ENCODE measurements at regions of chr7 and their contacts with region 1.

Region 1: GRCh38 chr7:73851410-73852234 is 9.3 kb upstream of the METTL27 start:
- DNase-seq: peak in 4 of 5 donors; percentile 15 to 53 (median 24)
- H3K4me3 ChIP-seq: no peak overlapping the region
- H3K4me3 Mint-ChIP-seq: peak overlapping the region in 2 of 8 donors; percentile 12 to 53
- H3K27ac ChIP-seq: no peak overlapping the region
- H3K27ac Mint-ChIP-seq: peak overlapping the region in 6 of 7 donors; percentile 7 to 65 (median 61)
- H3K4me1 ChIP-seq: peaks cover 17% of the 10 kb centered on the region
- H3K4me1 Mint-ChIP-seq: peaks cover 6 to 17% (median 11%) of the 10 kb centered on the region in 4 donors
- H3K27me3 ChIP-seq: no peaks in the 10 kb centered on the region
- H3K27me3 Mint-ChIP-seq: peaks cover 3 to 9% of the 10 kb centered on the region in 2 donors

Region 2: DNA sequence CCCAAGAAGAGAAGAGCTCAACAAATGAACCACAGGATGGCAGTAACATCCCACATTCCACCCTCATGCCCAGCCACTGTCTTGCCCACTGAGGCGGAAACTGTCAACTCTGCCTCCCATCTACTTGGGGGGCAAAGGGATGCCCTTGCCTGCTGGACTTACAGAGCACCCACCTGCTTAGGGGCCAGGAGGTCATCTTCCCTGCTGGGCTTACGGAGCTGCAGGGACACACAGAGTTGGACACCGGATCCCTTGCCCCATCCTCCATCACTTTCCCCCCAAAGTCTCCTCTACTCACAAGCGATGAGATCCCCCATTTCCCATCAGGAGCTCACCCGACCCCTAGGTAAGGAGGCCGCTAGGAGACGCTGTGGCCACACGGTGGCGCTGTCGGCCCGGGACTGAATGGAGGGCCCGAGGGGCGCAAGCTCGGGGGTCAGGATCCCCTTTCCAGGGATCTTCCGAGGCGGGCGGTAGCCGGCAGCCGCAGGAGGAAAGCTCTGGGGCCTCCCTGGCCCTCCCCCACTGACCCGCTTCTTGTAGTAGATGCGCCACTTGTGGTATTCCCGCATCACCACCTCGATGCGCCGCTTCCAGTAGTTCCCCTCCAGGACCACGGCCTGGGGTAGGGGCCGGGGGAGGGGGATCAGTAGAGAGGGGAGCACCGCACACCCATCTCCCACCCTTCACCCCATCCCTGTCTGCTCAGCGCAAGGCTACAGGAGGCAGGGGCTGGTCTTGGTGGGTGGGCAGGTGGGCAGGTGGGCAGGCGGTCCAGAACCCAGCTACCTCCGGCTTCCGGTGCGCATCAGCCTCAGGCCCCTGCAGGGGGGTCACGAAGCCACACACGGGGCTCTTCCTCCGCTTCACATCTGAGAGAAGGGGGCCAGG is 244.6 kb before region 1 on chr7:
- CTCF ChIA-PET with region 1: interaction called, 15 read pairs
- POLR2A ChIA-PET with region 1: no interaction called
- intact Hi-C with region 1: no loop called
- DNase-seq: peak; percentile 56 to 62 (median 59)
- H3K4me3 ChIP-seq: no peak overlapping the region
- H3K4me3 Mint-ChIP-seq: no peak overlapping the region
- H3K27ac ChIP-seq: no peak overlapping the region
- H3K27ac Mint-ChIP-seq: peak overlapping the region in 1 of 7 donors; percentile 19
- H3K4me1 ChIP-seq: peaks cover 6% of the 10 kb centered on the region
- H3K4me1 Mint-ChIP-seq: no peaks in the 10 kb centered on the region
- H3K27me3 ChIP-seq: no peaks in the 10 kb centered on the region
- H3K27me3 Mint-ChIP-seq: peaks cover 0 to 14% of the 10 kb centered on the region in 2 donors

Region 3: GRCh38 chr7:73811760-73812168 is 39.9 kb before region 1 on chr7:
- CTCF ChIA-PET with region 1: interaction called, 72 read pairs
- POLR2A ChIA-PET with region 1: interaction called, 4 read pairs
- intact Hi-C with region 1: loop called (anchors 1 kb)
- DNase-seq: peak in 4 of 5 donors; percentile 17 to 37 (median 27)
- H3K4me3 ChIP-seq: no peak overlapping the region
- H3K4me3 Mint-ChIP-seq: no peak overlapping the region
- H3K27ac ChIP-seq: no peak overlapping the region
- H3K27ac Mint-ChIP-seq: no peak overlapping the region
- H3K4me1 ChIP-seq: no peaks in the 10 kb centered on the region
- H3K4me1 Mint-ChIP-seq: no peaks in the 10 kb centered on the region
- H3K27me3 ChIP-seq: no peaks in the 10 kb centered on the region
- H3K27me3 Mint-ChIP-seq: peaks cover 9 to 11% of the 10 kb centered on the region in 2 donors

Region 4: DNA sequence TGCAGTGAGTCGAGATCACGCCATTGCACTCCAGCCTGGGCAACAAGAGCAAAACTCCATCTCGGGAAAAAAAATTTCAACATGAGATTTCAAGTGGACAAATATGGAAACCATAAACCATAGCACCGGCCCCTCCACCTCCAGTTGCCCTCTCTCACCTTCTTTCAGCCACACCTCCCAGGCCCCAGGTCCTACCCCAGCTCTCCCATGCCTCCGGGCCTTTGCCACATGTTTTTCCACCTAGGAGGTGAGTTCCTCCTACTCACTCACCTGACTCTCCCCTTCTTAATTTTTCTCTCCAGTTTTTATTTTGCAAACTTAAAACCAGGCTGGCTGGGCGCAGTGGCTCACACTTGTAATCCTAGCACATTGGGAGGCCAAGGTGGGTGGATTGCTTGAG is 34.5 kb before region 1 on chr7:
- CTCF ChIA-PET with region 1: interaction called, 72 read pairs
- POLR2A ChIA-PET with region 1: interaction called, 4 read pairs
- intact Hi-C with region 1: no loop called
- DNase-seq: no peak
- H3K4me3 ChIP-seq: no peak overlapping the region
- H3K4me3 Mint-ChIP-seq: no peak overlapping the region
- H3K27ac ChIP-seq: no peak overlapping the region
- H3K27ac Mint-ChIP-seq: peak overlapping the region in 1 of 7 donors; percentile 35
- H3K4me1 ChIP-seq: no peaks in the 10 kb centered on the region
- H3K4me1 Mint-ChIP-seq: no peaks in the 10 kb centered on the region
- H3K27me3 ChIP-seq: no peaks in the 10 kb centered on the region
- H3K27me3 Mint-ChIP-seq: peaks cover 5 to 11% of the 10 kb centered on the region in 2 donors

Region 5: GRCh38 chr7:73822319-73823076 is 29.1 kb before region 1 on chr7:
- CTCF ChIA-PET with region 1: interaction called, 51 read pairs
- POLR2A ChIA-PET with region 1: interaction called, 7 read pairs
- intact Hi-C with region 1: loop called (anchors 2 kb)
- DNase-seq: no peak
- H3K4me3 ChIP-seq: no peak overlapping the region
- H3K4me3 Mint-ChIP-seq: no peak overlapping the region
- H3K27ac ChIP-seq: no peak overlapping the region
- H3K27ac Mint-ChIP-seq: no peak overlapping the region
- H3K4me1 ChIP-seq: peaks cover 14% of the 10 kb centered on the region
- H3K4me1 Mint-ChIP-seq: peaks cover 10 to 34% (median 11%) of the 10 kb centered on the region in 4 donors
- H3K27me3 ChIP-seq: no peaks in the 10 kb centered on the region
- H3K27me3 Mint-ChIP-seq: peaks cover 3% of the 10 kb centered on the region in 2 donors

Region 6: GRCh38 chr7:73828107-73828803 is 23.4 kb before region 1 on chr7:
- CTCF ChIA-PET with region 1: interaction called, 51 read pairs
- POLR2A ChIA-PET with region 1: interaction called, 7 read pairs
- intact Hi-C with region 1: loop called (anchors 2 kb)
- DNase-seq: peak in 1 of 5 donors; percentile 22
- H3K4me3 ChIP-seq: no peak overlapping the region
- H3K4me3 Mint-ChIP-seq: peak overlapping the region in 6 of 8 donors; percentile 1 to 65 (median 52)
- H3K27ac ChIP-seq: no peak overlapping the region
- H3K27ac Mint-ChIP-seq: peak overlapping the region in 3 of 7 donors; percentile 28 to 83 (median 45)
- H3K4me1 ChIP-seq: peaks cover 30% of the 10 kb centered on the region
- H3K4me1 Mint-ChIP-seq: peaks cover 22 to 56% (median 29%) of the 10 kb centered on the region in 4 donors
- H3K27me3 ChIP-seq: no peaks in the 10 kb centered on the region
- H3K27me3 Mint-ChIP-seq: peaks cover 2 to 8% of the 10 kb centered on the region in 2 donors